Endothelial cell of umbilical vein (primary cell): ENCODE measurements at regions of chr5 and their contacts with region 1.

Region 1: GRCh38 chr5:17343675-17344074 is 126.2 kb downstream of the BASP1 start:
- DNase-seq: peak; percentile 91
- H3K4me3 ChIP-seq: no peak overlapping the region
- H3K27ac ChIP-seq: no peak overlapping the region
- H3K4me1 ChIP-seq: peaks cover 9% of the 10 kb centered on the region
- H3K27me3 ChIP-seq: peaks cover 0 to 2% of the 10 kb centered on the region in 2 experiments
- CTCF ChIP-seq: no peak
- POLR2A ChIP-seq: no peak

Region 2: GRCh38 chr5:17255471-17256021 is 88.1 kb before region 1 on chr5:
- CTCF ChIA-PET with region 1: no interaction called
- POLR2A ChIA-PET with region 1: no interaction called
- dilution Hi-C with region 1: no loop called
- intact Hi-C with region 1: loop called (anchors 5 kb)
- DNase-seq: no peak
- H3K4me3 ChIP-seq: no peak overlapping the region
- H3K27ac ChIP-seq: no peak overlapping the region
- H3K4me1 ChIP-seq: peaks cover 42% of the 10 kb centered on the region
- H3K27me3 ChIP-seq: no peaks in the 10 kb centered on the region
- CTCF ChIP-seq: no peak
- POLR2A ChIP-seq: no peak

Region 3: GRCh38 chr5:17412760-17413671 is 69.3 kb after region 1 on chr5:
- CTCF ChIA-PET with region 1: no interaction called
- POLR2A ChIA-PET with region 1: no interaction called
- dilution Hi-C with region 1: no loop called
- intact Hi-C with region 1: no loop called
- DNase-seq: no peak
- H3K4me3 ChIP-seq: no peak overlapping the region
- H3K27ac ChIP-seq: no peak overlapping the region
- H3K4me1 ChIP-seq: no peaks in the 10 kb centered on the region
- H3K27me3 ChIP-seq: no peaks in the 10 kb centered on the region
- CTCF ChIP-seq: no peak
- POLR2A ChIP-seq: no peak

Region 4: GRCh38 chr5:17918373-17919104 is 574.9 kb after region 1 on chr5:
- CTCF ChIA-PET with region 1: no interaction called
- POLR2A ChIA-PET with region 1: no interaction called
- dilution Hi-C with region 1: no loop called
- intact Hi-C with region 1: no loop called
- DNase-seq: no peak
- H3K4me3 ChIP-seq: no peak overlapping the region
- H3K27ac ChIP-seq: no peak overlapping the region
- H3K4me1 ChIP-seq: no peaks in the 10 kb centered on the region
- H3K27me3 ChIP-seq: no peaks in the 10 kb centered on the region
- CTCF ChIP-seq: no peak
- POLR2A ChIP-seq: no peak